ENCODE measurements at regions of chr6 and their contacts with region 1.

Region 1: DNA sequence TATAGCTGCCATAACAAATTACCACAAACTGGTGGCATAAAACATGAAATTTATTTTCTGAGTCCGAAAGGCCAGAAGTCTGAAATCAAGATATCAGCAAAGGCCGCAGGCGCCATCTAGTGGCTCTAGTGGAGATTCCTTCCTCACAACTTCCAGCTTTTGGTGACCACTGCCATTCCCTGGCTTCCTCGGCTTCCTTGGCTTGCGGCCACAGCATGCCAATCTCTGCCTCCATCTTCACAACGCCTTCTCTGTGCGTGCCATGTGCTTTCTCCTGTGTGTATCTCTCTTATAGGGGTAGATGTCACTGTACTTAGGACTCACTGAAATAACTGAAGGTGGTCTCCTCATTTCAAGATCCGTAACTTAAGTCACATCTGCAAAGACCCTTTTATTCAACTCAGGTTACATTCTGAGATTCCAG is 5.4 kb upstream of the PLAGL1 start:
- DNase-seq: peak; percentile 76 to 85
- H3K4me3 ChIP-seq: no peak overlapping the region
- H3K27ac ChIP-seq: no peak overlapping the region
- H3K4me1 ChIP-seq: no peaks in the 10 kb centered on the region
- H3K27me3 ChIP-seq: no peaks in the 10 kb centered on the region
- CTCF ChIP-seq: peak; percentile 61 to 92 (median 86)
- POLR2A ChIP-seq: no peak

Region 2: DNA sequence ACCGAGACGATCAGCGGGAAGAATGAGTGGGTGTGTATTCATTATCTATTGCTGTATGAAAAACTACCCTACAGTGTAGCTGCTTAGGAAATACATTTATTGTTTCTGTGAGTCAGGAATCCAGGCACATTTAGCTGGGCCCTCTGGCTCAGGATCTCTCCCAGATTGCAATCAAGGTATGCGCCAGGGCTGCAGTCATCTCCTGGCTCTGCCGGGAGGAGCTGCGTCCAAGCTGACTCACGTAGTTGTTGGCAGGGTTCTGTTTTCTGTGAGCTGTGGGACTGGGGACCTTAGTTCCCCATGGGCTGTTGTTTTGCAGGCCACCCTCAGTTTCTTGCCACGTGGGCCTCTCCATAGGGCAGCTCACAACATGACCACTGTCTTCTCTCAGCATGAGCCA is 433.8 kb before region 1 on chr6:
- intact Hi-C with region 1: loop called (anchors 2 kb)
- DNase-seq: no peak
- H3K4me3 ChIP-seq: no peak overlapping the region
- H3K27ac ChIP-seq: no peak overlapping the region
- H3K4me1 ChIP-seq: no peaks in the 10 kb centered on the region
- H3K27me3 ChIP-seq: no peaks in the 10 kb centered on the region
- CTCF ChIP-seq: no peak
- POLR2A ChIP-seq: no peak

Region 3: DNA sequence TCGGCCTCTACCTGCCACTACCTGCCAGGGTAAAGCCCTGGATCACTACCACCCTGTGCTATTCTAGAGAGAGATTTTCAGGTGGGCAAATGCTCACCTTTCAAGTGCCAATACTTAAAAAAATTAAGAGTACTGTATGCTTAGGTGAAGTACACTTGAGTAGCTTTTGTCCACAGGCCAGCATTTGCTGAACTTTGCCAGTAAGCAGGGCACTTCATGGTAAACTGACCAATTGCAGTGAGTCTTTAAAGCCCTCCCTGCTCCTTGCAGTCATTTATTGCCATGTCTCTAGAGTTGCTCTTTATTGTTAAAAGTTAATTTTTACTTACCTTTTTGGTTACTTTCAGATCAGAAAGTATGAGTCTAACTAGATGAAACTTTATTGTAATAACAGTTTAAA is 64.0 kb before region 1 on chr6:
- intact Hi-C with region 1: loop called (anchors 5 kb)
- DNase-seq: peak; percentile 58 to 64
- H3K4me3 ChIP-seq: no peak overlapping the region
- H3K27ac ChIP-seq: no peak overlapping the region
- H3K4me1 ChIP-seq: peaks cover 8% of the 10 kb centered on the region in 2 donors
- H3K27me3 ChIP-seq: no peaks in the 10 kb centered on the region
- CTCF ChIP-seq: no peak
- POLR2A ChIP-seq: no peak

Region 4: GRCh38 chr6:144131248-144131709 is 117.8 kb after region 1 on chr6:
- intact Hi-C with region 1: no loop called
- DNase-seq: no peak
- H3K4me3 ChIP-seq: no peak overlapping the region
- H3K27ac ChIP-seq: no peak overlapping the region
- H3K4me1 ChIP-seq: peaks cover 0 to 8% of the 10 kb centered on the region in 2 donors
- H3K27me3 ChIP-seq: no peaks in the 10 kb centered on the region
- CTCF ChIP-seq: no peak
- POLR2A ChIP-seq: no peak